Common myeloid progenitor, CD34-positive (primary cell): ENCODE measurements at regions of chr2 and their contacts with region 1.

Region 1: GRCh38 chr2:66574701-66575624 is 140.0 kb downstream of the MEIS1 start:
- DNase-seq: peak; percentile 91 to 97 (median 95)
- H3K4me3 ChIP-seq: peak overlapping the region; percentile 54 to 97 (median 86)
- H3K27ac ChIP-seq: peak overlapping the region; percentile 87 to 97
- H3K4me1 ChIP-seq: peaks cover under 1 to 70% (median 54%) of the 10 kb centered on the region in 4 experiments
- H3K27me3 ChIP-seq: peaks cover 0 to 16% (median 0%) of the 10 kb centered on the region in 5 experiments

Region 2: DNA sequence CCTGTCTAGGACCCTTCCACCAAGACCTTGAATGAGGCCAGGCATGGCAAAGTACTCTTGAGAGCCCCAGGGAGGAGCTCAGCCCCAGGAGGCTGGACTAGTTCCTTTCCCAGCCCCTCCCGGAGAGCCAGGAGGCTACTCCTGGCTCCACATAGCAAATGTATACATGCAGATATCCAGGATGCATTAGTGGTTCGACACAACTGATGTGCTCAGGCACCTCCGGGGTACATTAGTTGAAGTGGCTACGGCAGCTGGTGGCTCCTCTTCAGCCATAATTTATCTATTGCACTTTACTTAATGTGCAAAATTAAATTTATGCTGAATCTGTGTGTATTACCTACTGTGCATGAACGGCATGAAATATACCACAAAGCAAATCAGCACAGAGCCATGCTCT is 322.9 kb before region 1 on chr2:
- CTCF ChIA-PET with region 1: no interaction called
- POLR2A ChIA-PET with region 1: no interaction called
- DNase-seq: no peak
- H3K4me3 ChIP-seq: no peak overlapping the region
- H3K27ac ChIP-seq: no peak overlapping the region
- H3K4me1 ChIP-seq: no peaks in the 10 kb centered on the region
- H3K27me3 ChIP-seq: no peaks in the 10 kb centered on the region

Region 3: GRCh38 chr2:66434679-66435548 is 140.0 kb before region 1 on chr2 and contains the start of gene MEIS1:
- CTCF ChIA-PET with region 1: interaction called, 185 read pairs
- POLR2A ChIA-PET with region 1: interaction called, 22 read pairs
- DNase-seq: peak; percentile 99 to 100 (median 99)
- H3K4me3 ChIP-seq: peak within 1 kb of the TSS; percentile 73 to 97 (median 92)
- H3K27ac ChIP-seq: peak within 1 kb of the TSS; percentile 78 to 90
- H3K4me1 ChIP-seq: peaks cover 12 to 64% (median 29%) of the 10 kb centered on the region in 4 experiments
- H3K27me3 ChIP-seq: no peaks in the 10 kb centered on the region

Region 4: GRCh38 chr2:66587216-66587615 is 12.3 kb after region 1 on chr2:
- CTCF ChIA-PET with region 1: interaction called, 13 read pairs
- POLR2A ChIA-PET with region 1: no interaction called
- DNase-seq: peak in 2 of 3 donors; percentile 69 to 70
- H3K4me3 ChIP-seq: peak overlapping the region in 3 of 7 experiments; percentile 16 to 46 (median 43)
- H3K27ac ChIP-seq: no peak overlapping the region
- H3K4me1 ChIP-seq: peaks cover 2 to 40% (median 12%) of the 10 kb centered on the region in 4 experiments
- H3K27me3 ChIP-seq: peaks cover 0 to 7% (median 0%) of the 10 kb centered on the region in 5 experiments

Region 5: GRCh38 chr2:66661253-66662173 is 86.5 kb after region 1 on chr2:
- CTCF ChIA-PET with region 1: no interaction called
- POLR2A ChIA-PET with region 1: no interaction called
- DNase-seq: peak in 2 of 3 donors; percentile 68 to 78
- H3K4me3 ChIP-seq: peak overlapping the region in 4 of 7 experiments; percentile 12 to 72 (median 28)
- H3K27ac ChIP-seq: no peak overlapping the region
- H3K4me1 ChIP-seq: peaks cover 0 to 24% (median 7%) of the 10 kb centered on the region in 4 experiments
- H3K27me3 ChIP-seq: no peaks in the 10 kb centered on the region